Activated CD4-positive, alpha-beta T cell treated with anti-CD3 and anti-CD28 coated beads, Interleukin-2, amount 10 ng/mL, durations not matched to agents 24 days and 14 days (primary cell): ENCODE measurements at regions of chr3 and their contacts with region 1.

Region 1: GRCh38 chr3:128617557-128618397 is 32.8 kb downstream of the RPN1 start:
- DNase-seq: peak; percentile 100
- H3K4me3 Mint-ChIP-seq: peak overlapping the region; percentile 95
- H3K27ac Mint-ChIP-seq: peak overlapping the region; percentile 96
- H3K4me1 Mint-ChIP-seq: peaks cover 34% of the 10 kb centered on the region
- H3K27me3 Mint-ChIP-seq: no peaks in the 10 kb centered on the region

Region 2: DNA sequence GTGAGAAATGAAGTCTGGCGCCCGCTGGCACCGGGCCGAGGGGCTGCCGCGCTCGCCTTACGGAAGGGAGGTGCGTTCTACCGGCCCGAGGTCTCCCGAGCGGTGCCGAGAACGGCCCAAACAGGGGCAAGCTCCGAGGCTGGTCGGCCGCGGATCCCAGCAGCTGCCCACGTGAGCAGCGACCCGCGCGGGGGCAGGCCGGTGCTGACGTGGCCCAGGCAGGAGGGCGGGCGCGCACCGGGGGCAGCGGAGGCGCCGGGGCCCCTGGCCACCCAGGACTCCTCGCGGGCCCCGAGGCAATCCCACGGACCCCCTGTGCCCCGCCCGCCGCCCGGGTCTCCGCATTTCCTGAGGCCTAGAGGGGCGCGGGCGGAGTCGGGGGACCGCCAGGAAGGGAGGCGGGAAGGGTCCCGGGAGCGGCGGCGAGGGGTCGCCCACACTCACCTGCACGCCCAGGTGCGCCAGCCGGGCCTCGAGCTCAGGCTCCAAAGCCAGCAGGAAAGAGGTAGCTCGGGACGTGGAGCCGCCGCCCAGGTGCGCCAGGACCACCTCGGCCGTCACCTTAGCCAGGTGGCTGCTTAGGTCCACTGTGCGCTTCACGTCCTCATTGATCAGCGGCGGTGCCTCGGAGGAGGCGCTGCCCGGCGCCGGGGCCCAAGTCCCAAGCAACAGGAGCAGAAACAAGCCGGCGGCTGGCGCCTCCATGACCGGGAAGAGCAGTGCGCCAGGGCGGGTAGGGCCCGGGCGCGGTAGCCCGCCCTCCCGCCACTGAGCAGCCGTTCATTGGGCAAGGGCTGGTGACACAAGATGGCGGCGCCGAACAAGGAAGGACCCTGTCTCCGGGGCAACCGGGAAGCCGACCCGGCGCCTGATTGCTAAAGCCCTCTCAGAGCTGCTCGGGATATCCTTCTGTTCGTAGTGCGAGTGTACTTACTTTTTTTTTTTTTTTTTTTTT is 32.6 kb after region 1 on chr3 and contains the start of gene RPN1:
- intact Hi-C with region 1: loop called (anchors 1 kb)
- DNase-seq: peak; percentile 98
- H3K4me3 Mint-ChIP-seq: peak within 1 kb of the TSS; percentile 88
- H3K27ac Mint-ChIP-seq: peak within 1 kb of the TSS; percentile 92
- H3K4me1 Mint-ChIP-seq: peaks cover 32% of the 10 kb centered on the region
- H3K27me3 Mint-ChIP-seq: no peaks in the 10 kb centered on the region
- total RNA-seq, gene RPN1: 192 and 194 TPM in 2 replicates

Region 3: GRCh38 chr3:128845778-128846485 is 228.2 kb after region 1 on chr3:
- intact Hi-C with region 1: loop called (anchors 1 kb)
- DNase-seq: peak; percentile 94
- H3K4me3 Mint-ChIP-seq: peak overlapping the region; percentile 69
- H3K27ac Mint-ChIP-seq: peak overlapping the region; percentile 88
- H3K4me1 Mint-ChIP-seq: peaks cover 18% of the 10 kb centered on the region
- H3K27me3 Mint-ChIP-seq: no peaks in the 10 kb centered on the region

Region 4: DNA sequence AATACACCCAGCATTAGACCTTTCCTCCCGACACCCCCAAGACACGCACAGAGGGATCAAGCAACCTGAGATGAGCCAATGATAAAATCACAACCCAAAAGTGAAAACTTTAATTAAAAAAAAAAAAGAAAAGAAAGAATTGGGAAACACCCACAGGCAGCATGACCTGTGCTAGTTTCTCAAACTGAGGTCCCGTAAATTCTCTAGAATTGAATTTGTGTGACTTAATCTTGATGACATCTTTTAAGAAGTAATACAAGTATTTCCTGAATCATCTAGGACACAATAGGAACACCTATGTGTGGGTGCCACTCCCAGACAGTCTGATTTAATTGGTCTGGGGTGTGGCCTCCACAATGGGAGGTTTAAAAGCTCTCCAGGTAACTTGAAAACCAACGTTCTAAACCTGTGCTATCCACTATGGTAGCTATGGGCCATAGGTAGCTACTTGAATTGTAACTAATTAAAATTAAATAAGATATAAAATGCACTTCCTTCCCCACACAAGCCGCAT is 348.0 kb after region 1 on chr3:
- intact Hi-C with region 1: no loop called
- DNase-seq: no peak
- H3K4me3 Mint-ChIP-seq: no peak overlapping the region
- H3K27ac Mint-ChIP-seq: no peak overlapping the region
- H3K4me1 Mint-ChIP-seq: peaks cover 5% of the 10 kb centered on the region
- H3K27me3 Mint-ChIP-seq: peaks cover 8% of the 10 kb centered on the region